ENCODE measurements at regions of chr22 and their contacts with region 1.

Region 1: DNA sequence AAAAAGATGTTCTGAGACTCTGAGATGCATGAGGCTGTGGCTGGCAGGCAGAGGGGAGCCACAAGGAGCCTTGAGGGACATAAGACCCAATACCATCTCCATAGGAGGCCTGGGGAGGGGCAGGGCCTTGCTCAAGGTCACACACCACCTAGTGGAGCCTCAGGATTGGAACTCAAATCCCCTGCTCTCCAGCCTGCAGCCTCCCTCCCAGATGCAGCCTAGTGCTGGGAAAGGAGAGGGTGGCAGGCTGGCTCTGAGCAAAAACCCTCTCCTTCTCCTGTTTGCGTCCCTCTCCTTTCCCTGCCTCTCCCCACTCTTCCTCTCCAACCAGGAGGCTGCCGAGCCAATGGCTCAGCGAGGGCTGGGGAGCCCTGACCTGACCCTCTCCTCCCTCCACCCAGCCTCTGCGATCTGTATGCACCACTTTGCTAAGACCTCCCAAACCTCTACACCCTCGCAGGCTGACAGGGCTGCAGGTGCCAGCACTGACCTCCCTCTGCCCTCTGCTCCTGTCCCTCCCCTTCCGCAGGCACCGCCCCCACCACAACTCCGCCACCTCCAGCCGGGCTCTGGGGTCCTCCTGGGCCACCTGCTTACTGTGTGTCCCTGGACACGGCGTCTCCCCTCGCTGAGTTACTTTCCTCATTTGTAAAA is 14.7 kb downstream of the IGLL1 start:
- H3K4me3 ChIP-seq: no peak overlapping the region; the same call in 1 of the 2 replicates
- H3K27ac ChIP-seq: no peak overlapping the region; the same call in 1 of the 2 replicates
- H3K4me1 ChIP-seq: no peaks in the 10 kb centered on the region; the same call in 1 of the 2 replicates
- CTCF ChIP-seq: no peak

Region 2: DNA sequence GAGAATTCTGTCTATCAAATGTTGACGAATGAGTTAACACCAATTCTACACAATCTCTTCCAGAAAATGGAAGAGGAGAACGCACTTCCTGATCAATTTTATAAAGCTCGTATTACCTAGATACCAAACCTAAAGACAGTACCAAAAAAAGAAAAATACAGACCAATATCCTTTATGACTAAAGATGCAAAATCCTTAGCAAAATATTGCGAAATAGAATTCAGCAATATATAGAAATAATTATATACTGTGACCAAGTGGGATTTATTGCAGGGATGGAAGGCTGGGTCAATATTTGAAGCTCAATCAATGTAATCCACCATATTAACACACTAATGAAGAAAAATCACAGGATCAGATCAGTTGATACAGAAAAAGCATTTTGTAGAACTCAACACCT is 247.0 kb after region 1 on chr22:
- CTCF ChIA-PET with region 1: interaction called, 10 read pairs
- POLR2A ChIA-PET with region 1: no interaction called
- H3K4me3 ChIP-seq: no peak overlapping the region
- H3K27ac ChIP-seq: no peak overlapping the region
- H3K4me1 ChIP-seq: no peaks in the 10 kb centered on the region
- CTCF ChIP-seq: no peak

Measured in HEK293 (cell line).